K562 (cell line): ENCODE measurements at regions of chr1 and their contacts with region 1.

Region 1: GRCh38 chr1:115469703-115470476 is 131.8 kb upstream of the NGF start:
- DNase-seq: peak; percentile 59 to 85 (median 76)
- ATAC-seq: peak; percentile 93
- H3K4me3 ChIP-seq: no peak overlapping the region
- H3K27ac ChIP-seq: no peak overlapping the region
- H3K4me1 ChIP-seq: no peaks in the 10 kb centered on the region
- H3K27me3 ChIP-seq: no peaks in the 10 kb centered on the region; a peak in 1 of 5 replicates
- CTCF ChIP-seq: peak; percentile 90 to 96 (median 91)
- EP300 ChIP-seq: no peak
- POLR2A ChIP-seq: no peak
- RAD21 ChIP-seq: peak; percentile 63 to 82

Region 2: DNA sequence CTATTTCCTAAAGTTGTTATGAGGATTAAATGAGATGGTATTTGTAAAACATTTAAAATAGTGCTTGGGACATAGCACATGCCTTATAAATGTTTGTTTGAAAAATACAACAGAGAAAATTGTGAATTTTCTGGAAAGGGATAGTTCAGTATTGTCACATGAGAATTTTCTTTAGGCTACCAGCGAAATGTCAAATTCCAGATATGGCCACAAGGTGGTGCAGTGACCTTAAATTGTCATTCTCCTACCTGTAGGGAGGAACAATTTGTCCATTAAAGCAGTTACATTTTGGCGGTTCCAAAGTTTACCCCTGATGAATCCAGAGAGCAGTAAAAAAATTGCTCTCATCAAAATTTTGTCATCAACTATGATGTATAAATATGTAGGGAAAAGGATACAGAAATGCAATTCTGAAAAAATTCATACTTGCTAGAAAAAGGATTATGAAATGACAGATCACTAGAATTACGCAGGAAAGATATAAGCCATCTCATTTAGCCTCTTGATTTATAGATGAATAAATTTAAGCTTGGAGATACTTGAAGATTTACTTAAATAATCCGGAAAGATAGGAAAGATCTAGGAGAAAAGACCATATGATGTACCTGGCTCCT is 490.5 kb before region 1 on chr1:
- CTCF ChIA-PET with region 1: no interaction called
- POLR2A ChIA-PET with region 1: no interaction called
- in situ Hi-C with region 1: no loop called
- intact Hi-C with region 1: loop called (anchors 10 kb)
- DNase-seq: peak; percentile 43 to 64 (median 58)
- ATAC-seq: peak; percentile 63; the same call in 2 of the 3 replicates
- H3K4me3 ChIP-seq: no peak overlapping the region
- H3K27ac ChIP-seq: no peak overlapping the region
- H3K4me1 ChIP-seq: no peaks in the 10 kb centered on the region
- H3K27me3 ChIP-seq: no peaks in the 10 kb centered on the region
- CTCF ChIP-seq: peak; percentile 67 to 81 (median 72)
- EP300 ChIP-seq: no peak
- POLR2A ChIP-seq: no peak
- RAD21 ChIP-seq: peak; percentile 59 to 81

Region 3: DNA sequence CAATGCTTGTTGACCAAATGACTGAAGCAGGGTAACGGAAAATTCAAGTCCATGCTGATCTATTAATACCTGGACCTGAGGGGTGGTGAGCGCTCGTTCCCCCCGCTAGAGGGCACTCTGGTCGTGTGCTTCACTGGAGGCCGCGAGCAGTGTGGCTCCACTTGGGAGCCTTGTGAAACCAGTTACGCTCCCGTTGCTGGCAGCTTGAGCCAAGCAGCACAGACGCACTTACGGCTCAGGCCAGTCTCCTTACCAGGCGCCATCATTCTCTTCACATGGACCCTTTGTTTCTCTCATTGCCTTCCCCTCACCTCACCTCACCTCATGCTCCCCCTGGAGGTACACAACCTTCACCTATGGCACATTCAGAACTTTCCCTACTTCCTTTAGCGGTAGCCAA is 330.9 kb before region 1 on chr1:
- CTCF ChIA-PET with region 1: interaction called, 16 read pairs
- POLR2A ChIA-PET with region 1: interaction called, 7 read pairs
- in situ Hi-C with region 1: loop called (anchors 5 kb)
- intact Hi-C with region 1: no loop called
- DNase-seq: peak; percentile 82 to 86 (median 83)
- ATAC-seq: peak; percentile 99
- H3K4me3 ChIP-seq: no peak overlapping the region
- H3K27ac ChIP-seq: no peak overlapping the region
- H3K4me1 ChIP-seq: peaks cover 0 to 2% of the 10 kb centered on the region in 2 experiments; a peak in 1 of 5 replicates
- H3K27me3 ChIP-seq: no peaks in the 10 kb centered on the region; a peak in 1 of 5 replicates
- CTCF ChIP-seq: peak; percentile 91 to 98 (median 92)
- EP300 ChIP-seq: no peak
- POLR2A ChIP-seq: no peak
- RAD21 ChIP-seq: peak; percentile 88 to 93

Region 4: GRCh38 chr1:115189814-115190539 is 279.9 kb before region 1 on chr1:
- CTCF ChIA-PET with region 1: no interaction called
- POLR2A ChIA-PET with region 1: no interaction called
- in situ Hi-C with region 1: no loop called
- intact Hi-C with region 1: no loop called
- DNase-seq: no peak
- ATAC-seq: no peak
- H3K4me3 ChIP-seq: no peak overlapping the region
- H3K27ac ChIP-seq: no peak overlapping the region
- H3K4me1 ChIP-seq: no peaks in the 10 kb centered on the region; a peak in 1 of 5 replicates
- H3K27me3 ChIP-seq: peaks cover 0 to 3% of the 10 kb centered on the region in 2 experiments; a peak in 2 of 5 replicates
- CTCF ChIP-seq: no peak
- EP300 ChIP-seq: no peak
- POLR2A ChIP-seq: no peak
- RAD21 ChIP-seq: no peak

Region 5: GRCh38 chr1:115275212-115275611 is 194.7 kb before region 1 on chr1:
- CTCF ChIA-PET with region 1: no interaction called
- POLR2A ChIA-PET with region 1: no interaction called
- in situ Hi-C with region 1: no loop called
- intact Hi-C with region 1: loop called (anchors 10 kb)
- DNase-seq: peak; percentile 30 to 58 (median 54)
- ATAC-seq: peak; percentile 59; the same call in 2 of the 3 replicates
- H3K4me3 ChIP-seq: no peak overlapping the region
- H3K27ac ChIP-seq: no peak overlapping the region
- H3K4me1 ChIP-seq: no peaks in the 10 kb centered on the region
- H3K27me3 ChIP-seq: no peaks in the 10 kb centered on the region
- CTCF ChIP-seq: peak; percentile 45 to 58 (median 58); a peak in 5 of 6 replicates
- EP300 ChIP-seq: no peak
- POLR2A ChIP-seq: no peak
- RAD21 ChIP-seq: peak in 1 of 2 experiments; percentile 39; a peak in 1 of 4 replicates

Region 6: GRCh38 chr1:115564206-115564605 is 94.3 kb after region 1 on chr1:
- CTCF ChIA-PET with region 1: no interaction called
- POLR2A ChIA-PET with region 1: no interaction called
- in situ Hi-C with region 1: no loop called
- intact Hi-C with region 1: no loop called
- DNase-seq: no peak
- ATAC-seq: peak; percentile 55; the same call in 2 of the 3 replicates
- H3K4me3 ChIP-seq: no peak overlapping the region
- H3K27ac ChIP-seq: no peak overlapping the region
- H3K4me1 ChIP-seq: peaks cover 0 to 3% of the 10 kb centered on the region in 2 experiments; a peak in 1 of 5 replicates
- H3K27me3 ChIP-seq: no peaks in the 10 kb centered on the region
- CTCF ChIP-seq: no peak
- EP300 ChIP-seq: no peak
- POLR2A ChIP-seq: no peak
- RAD21 ChIP-seq: no peak

Region 7: DNA sequence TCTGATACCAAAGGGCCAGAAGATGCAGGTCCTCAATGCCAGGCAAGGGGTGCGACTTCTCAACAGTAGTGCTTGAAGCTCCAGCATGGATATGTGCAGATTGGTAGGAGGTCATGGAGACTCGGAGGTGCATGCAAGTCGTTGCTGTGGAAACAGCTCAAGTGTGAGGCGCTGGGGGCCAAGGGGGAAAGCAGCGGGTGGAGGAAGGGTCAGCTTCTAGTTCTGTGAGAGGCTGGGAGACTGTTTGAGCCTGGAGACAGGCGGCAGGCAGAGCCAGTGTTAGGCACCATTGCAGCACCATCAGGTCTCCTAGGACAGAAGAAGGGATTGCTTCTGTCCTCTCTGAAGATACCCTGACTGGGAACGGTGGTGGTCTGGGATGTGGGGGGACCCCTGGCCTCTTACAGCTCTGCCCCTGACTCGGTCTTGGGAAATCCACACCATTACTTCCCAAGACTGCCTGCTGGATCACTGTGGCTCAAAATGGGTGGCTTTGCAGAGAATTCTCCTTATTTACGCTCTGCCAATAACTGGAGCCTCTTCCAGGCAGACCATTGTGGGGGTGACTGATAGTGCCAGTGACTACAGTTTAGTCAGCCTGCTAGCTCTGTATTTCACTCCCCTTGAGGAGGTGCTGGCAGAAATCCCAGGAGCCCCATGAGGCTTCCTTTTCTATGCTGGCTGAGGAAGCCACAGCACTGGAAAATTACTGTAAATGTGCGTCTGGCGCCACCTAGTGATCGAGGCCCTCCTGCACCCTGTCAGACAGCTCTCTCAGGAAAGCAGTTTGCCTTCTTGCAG is 125.6 kb after region 1 on chr1:
- CTCF ChIA-PET with region 1: no interaction called
- POLR2A ChIA-PET with region 1: interaction called, 3 read pairs
- in situ Hi-C with region 1: no loop called
- intact Hi-C with region 1: loop called (anchors 10 kb)
- DNase-seq: peak; percentile 75 to 82 (median 78)
- ATAC-seq: peak; percentile 100
- H3K4me3 ChIP-seq: no peak overlapping the region
- H3K27ac ChIP-seq: no peak overlapping the region
- H3K4me1 ChIP-seq: no peaks in the 10 kb centered on the region
- H3K27me3 ChIP-seq: no peaks in the 10 kb centered on the region
- CTCF ChIP-seq: peak; percentile 88 to 93 (median 93)
- EP300 ChIP-seq: no peak
- POLR2A ChIP-seq: no peak
- RAD21 ChIP-seq: peak; percentile 83 to 91

Region 8: DNA sequence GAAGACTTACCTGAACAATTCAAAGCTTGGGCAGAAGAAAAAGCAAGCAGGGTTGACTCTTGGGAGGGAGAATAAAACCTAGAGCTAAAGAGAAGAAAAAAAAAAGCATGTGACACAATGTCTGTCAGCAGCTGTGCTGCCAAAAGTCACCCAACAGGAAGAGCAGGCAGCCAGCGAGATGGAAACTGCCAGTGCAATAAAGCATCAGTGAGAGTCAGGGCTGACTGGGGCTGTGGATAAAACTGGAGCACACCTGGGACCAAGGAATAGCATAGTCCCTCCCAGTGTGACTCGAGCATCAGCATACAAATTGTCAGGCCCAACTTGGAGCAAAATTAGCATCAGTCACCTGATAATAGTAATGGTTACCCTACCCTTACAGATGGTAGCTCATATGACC is 441.4 kb after region 1 on chr1:
- CTCF ChIA-PET with region 1: no interaction called
- POLR2A ChIA-PET with region 1: no interaction called
- in situ Hi-C with region 1: no loop called
- intact Hi-C with region 1: no loop called
- DNase-seq: no peak
- ATAC-seq: no peak
- H3K4me3 ChIP-seq: no peak overlapping the region
- H3K27ac ChIP-seq: no peak overlapping the region
- H3K4me1 ChIP-seq: no peaks in the 10 kb centered on the region
- H3K27me3 ChIP-seq: peaks cover under 1 to 5% of the 10 kb centered on the region in 2 experiments; a peak in 2 of 5 replicates
- CTCF ChIP-seq: no peak
- EP300 ChIP-seq: no peak
- POLR2A ChIP-seq: no peak
- RAD21 ChIP-seq: no peak